ENCODE measurements at regions of chr14 and their contacts with region 1.

Region 1: GRCh38 chr14:67526676-67527459 is 6.2 kb upstream of the PLEKHH1 start:
- DNase-seq: peak; percentile 62
- H3K4me3 ChIP-seq: no peak overlapping the region
- H3K27ac ChIP-seq: no peak overlapping the region
- H3K4me1 ChIP-seq: no peaks in the 10 kb centered on the region
- H3K27me3 ChIP-seq: peaks cover 29 to 36% of the 10 kb centered on the region in 2 experiments
- CTCF ChIP-seq: peak; percentile 56 to 70
- POLR2A ChIP-seq: no peak

Region 2: DNA sequence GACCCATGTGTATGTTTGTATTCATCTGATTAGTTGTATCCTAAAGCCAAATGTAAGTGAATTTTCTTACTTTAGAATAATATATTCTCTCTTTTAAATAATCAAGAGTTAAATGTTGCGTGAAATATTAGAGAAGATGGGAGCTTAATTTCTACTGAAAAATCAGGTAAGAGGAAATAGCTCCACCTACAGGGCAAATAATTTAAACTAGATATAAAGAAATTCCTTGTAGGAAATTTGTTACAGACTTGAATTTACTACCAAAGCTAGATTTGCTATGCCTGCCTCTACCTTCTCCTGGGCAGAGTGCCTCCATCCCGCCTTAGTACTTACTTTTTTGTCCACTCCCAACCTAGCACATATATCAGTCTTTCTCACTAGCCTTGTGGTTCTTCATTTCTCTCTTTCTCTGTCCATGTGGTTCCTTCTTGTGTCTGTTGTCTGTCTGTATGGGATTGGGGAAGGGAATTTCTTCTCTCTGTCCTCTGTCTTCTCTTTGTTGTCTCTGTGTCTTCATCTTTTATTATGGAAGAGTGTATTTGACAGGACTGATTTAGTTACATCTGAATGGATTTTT is 240.9 kb before region 1 on chr14:
- CTCF ChIA-PET with region 1: no interaction called
- POLR2A ChIA-PET with region 1: no interaction called
- dilution Hi-C with region 1: no loop called
- intact Hi-C with region 1: no loop called
- DNase-seq: peak; percentile 39
- H3K4me3 ChIP-seq: no peak overlapping the region
- H3K27ac ChIP-seq: no peak overlapping the region
- H3K4me1 ChIP-seq: no peaks in the 10 kb centered on the region
- H3K27me3 ChIP-seq: no peaks in the 10 kb centered on the region
- CTCF ChIP-seq: peak; percentile 4 to 7
- POLR2A ChIP-seq: no peak

Region 3: DNA sequence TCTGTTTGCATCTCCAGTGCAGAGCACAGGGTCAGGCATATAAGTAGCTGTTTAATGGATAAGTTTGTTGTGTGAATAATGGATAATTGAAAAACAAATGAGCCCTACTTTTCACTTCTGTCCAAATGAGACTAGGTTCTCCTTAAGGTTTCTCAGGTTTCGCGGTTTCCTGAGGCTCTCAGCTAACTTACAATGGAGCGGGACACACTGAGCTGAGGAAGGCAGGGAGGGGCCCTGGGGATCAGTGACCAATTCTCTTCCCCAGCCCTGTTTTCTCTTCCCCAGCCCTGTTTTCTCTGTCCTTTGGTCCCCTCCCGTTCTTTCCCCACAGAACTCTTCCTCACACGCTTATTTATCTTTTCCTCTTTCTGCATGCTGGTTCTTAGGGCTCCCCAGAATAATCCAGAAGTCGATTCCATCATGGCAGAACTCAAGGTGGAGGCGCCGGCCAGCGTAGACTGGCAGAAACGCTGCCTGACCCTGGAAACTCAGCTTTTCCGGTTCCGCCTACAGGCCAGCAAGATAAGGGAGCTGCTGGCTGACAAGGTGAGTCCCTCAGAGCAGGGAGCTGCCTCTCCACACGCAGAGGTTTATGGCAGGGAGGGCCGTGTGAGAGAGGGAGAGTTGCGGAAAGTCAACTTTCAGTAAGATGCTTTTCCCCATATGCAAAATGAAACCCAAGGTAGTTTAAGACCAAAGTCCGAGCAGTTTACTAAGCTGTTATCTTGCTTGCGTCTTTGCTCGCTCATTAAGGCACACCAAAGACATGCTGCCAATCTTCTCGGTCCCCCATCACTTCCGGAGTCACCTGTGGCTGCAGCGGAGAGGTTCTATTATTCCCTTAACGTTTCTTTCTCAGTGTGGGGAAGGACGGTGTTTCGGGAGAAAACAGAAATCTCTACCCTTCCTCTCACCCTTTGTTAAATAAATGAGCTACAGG is 14.8 kb after region 1 on chr14:
- CTCF ChIA-PET with region 1: interaction called, 30 read pairs
- POLR2A ChIA-PET with region 1: no interaction called
- dilution Hi-C with region 1: no loop called
- intact Hi-C with region 1: no loop called
- DNase-seq: no peak
- H3K4me3 ChIP-seq: no peak overlapping the region
- H3K27ac ChIP-seq: no peak overlapping the region
- H3K4me1 ChIP-seq: peaks cover 6% of the 10 kb centered on the region
- H3K27me3 ChIP-seq: peaks cover 30 to 48% of the 10 kb centered on the region in 2 experiments
- CTCF ChIP-seq: no peak
- POLR2A ChIP-seq: no peak

Region 4: GRCh38 chr14:67562025-67562775 is 35.3 kb after region 1 on chr14:
- CTCF ChIA-PET with region 1: interaction called, 40 read pairs
- POLR2A ChIA-PET with region 1: interaction called, 5 read pairs
- dilution Hi-C with region 1: no loop called
- intact Hi-C with region 1: no loop called
- DNase-seq: no peak
- H3K4me3 ChIP-seq: no peak overlapping the region
- H3K27ac ChIP-seq: no peak overlapping the region
- H3K4me1 ChIP-seq: no peaks in the 10 kb centered on the region
- H3K27me3 ChIP-seq: no peaks in the 10 kb centered on the region
- CTCF ChIP-seq: no peak
- POLR2A ChIP-seq: no peak

Region 5: DNA sequence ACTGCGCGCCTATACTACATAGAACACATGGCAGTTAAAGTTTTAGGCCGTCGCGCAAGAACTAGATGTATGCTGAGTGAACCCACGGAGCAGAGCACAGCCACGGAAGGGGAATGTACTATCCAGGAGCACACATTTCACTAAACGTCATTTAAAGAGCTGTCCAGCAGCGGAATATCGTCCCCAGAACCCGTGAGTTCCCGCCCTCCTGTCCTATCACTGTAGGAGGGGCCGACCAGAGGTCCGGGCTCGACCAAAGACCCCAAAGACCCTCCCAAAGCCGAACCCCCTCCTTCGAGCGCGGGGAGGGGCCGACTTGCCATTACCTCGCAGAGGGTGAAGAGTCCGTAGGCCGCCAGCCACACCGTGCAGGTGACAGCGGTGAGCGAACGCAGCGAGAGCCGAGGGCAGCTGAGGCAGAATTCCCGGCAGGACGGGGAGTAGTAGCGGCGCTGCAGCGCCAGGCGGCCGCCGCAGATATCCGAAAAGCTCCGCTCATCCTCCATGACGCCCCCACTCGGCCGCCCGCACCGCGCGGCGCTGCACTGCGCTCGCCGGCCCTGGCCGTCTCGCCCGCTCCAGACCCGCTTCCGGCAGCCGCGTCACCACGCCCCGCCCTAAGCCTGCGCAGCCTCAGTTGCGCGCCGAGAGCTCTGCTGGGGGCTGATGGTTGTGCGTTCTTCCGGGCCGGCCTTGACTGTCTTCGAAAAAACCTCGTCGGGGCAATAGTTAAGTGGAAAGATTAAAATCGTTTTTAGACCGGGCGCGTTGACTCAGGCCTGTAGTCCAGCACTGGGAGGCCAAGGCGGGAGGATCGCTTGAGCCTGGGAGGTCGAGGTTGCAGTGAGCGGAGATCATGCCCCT is 73.1 kb after region 1 on chr14 and contains the start of gene PIGH:
- CTCF ChIA-PET with region 1: interaction called, 21 read pairs
- POLR2A ChIA-PET with region 1: no interaction called
- dilution Hi-C with region 1: no loop called
- intact Hi-C with region 1: no loop called
- DNase-seq: peak; percentile 88
- H3K4me3 ChIP-seq: peak within 1 kb of the TSS; percentile 33 to 60 (median 54)
- H3K27ac ChIP-seq: no peak within 1 kb of the TSS
- H3K4me1 ChIP-seq: peaks cover 6% of the 10 kb centered on the region
- H3K27me3 ChIP-seq: peaks cover 0 to 4% of the 10 kb centered on the region in 2 experiments
- CTCF ChIP-seq: peak; percentile 41 to 80
- POLR2A ChIP-seq: peak; percentile 80
- total RNA-seq, gene PIGH: 9.9 and 12.3 TPM in 2 replicates

Measured in endothelial cell of umbilical vein (primary cell).